ENCODE measurements at regions of chr1 and their contacts with region 1.

Region 1: DNA sequence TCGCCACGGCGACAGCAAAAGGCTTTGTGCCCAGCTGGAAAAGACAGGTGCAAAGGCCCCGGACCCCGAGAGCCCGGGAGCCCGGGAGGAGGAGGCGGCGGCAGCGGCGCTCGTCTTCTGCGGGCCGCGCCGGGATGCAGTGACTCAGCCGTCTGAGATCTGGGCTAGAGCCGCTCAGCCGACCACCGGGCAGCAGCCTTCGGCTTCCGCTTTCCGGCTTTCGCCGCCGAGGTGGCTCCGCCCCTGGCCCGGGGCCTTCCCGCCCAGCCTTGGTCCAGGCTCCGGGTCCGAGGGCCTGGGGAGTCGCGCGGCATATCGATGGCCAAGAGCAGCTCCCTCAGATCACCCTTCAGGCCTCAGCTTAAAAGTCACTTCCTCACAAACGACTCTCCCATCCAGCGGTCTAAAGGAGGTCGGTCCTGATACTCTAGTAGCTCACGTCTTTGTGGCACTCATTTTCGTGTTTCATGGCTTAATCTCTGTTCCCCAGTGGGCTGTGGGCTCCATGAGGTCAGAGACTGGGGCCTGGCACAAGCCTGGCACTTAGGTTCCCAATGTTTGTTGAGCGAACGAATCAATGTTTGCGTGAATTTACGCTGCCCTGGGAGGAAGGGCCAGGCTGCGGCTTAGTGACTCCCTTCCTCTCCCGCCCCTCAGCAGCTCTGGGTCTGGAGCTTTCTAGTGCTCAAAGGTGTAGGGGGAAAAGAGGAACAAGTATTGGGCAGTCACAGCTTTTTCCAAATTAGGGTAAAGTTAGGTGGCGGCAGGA is at the start of gene PHTF1:
- DNase-seq: peak; percentile 91 to 93 (median 92)
- ATAC-seq: peak; percentile 95
- H3K4me3 ChIP-seq: peak within 1 kb of the TSS; percentile 75
- H3K27ac ChIP-seq: peak within 1 kb of the TSS; percentile 96
- H3K4me1 ChIP-seq: peaks cover 18 to 20% of the 10 kb centered on the region in 2 experiments
- H3K27me3 ChIP-seq: no peaks in the 10 kb centered on the region
- CTCF ChIP-seq: no peak
- EP300 ChIP-seq: peak; percentile 4; the same call in 1 of the 2 replicates
- POLR2A ChIP-seq: peak; percentile 97
- RAD21 ChIP-seq: peak in 1 of 2 experiments; percentile 11; a peak in 1 of 4 replicates
- polyA plus RNA-seq, gene PHTF1: 8.4 to 10.8 TPM

Region 2: GRCh38 chr1:113534130-113534817 is 225.2 kb before region 1 on chr1:
- CTCF ChIA-PET with region 1: no interaction called
- POLR2A ChIA-PET with region 1: no interaction called
- in situ Hi-C with region 1: no loop called
- intact Hi-C with region 1: no loop called
- DNase-seq: no peak
- ATAC-seq: no peak
- H3K4me3 ChIP-seq: no peak overlapping the region
- H3K27ac ChIP-seq: no peak overlapping the region
- H3K4me1 ChIP-seq: no peaks in the 10 kb centered on the region
- H3K27me3 ChIP-seq: no peaks in the 10 kb centered on the region
- CTCF ChIP-seq: no peak
- EP300 ChIP-seq: no peak
- POLR2A ChIP-seq: no peak
- RAD21 ChIP-seq: no peak

Region 3: GRCh38 chr1:113692342-113692741 is 67.2 kb before region 1 on chr1:
- CTCF ChIA-PET with region 1: no interaction called
- POLR2A ChIA-PET with region 1: interaction called, 3 read pairs
- in situ Hi-C with region 1: no loop called
- intact Hi-C with region 1: loop called (anchors 5 kb)
- DNase-seq: no peak
- ATAC-seq: no peak
- H3K4me3 ChIP-seq: no peak overlapping the region
- H3K27ac ChIP-seq: no peak overlapping the region
- H3K4me1 ChIP-seq: peaks cover 0 to 11% of the 10 kb centered on the region in 2 experiments; a peak in 2 of 5 replicates
- H3K27me3 ChIP-seq: no peaks in the 10 kb centered on the region
- CTCF ChIP-seq: no peak
- EP300 ChIP-seq: no peak
- POLR2A ChIP-seq: no peak
- RAD21 ChIP-seq: no peak

Region 4: DNA sequence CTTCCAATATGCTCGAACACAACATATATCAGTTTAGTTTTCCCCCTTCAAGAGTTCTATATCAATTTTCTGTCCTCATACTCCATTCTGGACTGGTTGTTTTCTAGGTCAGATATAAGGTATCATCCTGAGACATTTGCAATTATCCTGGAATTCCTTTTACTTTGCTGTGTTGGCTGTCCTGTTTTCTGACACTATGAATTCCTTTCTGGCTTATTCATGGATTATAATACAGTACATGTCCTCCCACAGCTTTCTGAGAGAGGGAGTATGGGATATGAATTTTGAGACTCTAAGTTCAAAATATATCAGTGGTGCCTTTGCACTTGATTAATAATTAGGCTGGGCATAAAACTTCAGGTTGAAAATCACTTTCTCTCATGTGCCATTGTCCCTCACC is 12.1 kb before region 1 on chr1:
- CTCF ChIA-PET with region 1: no interaction called
- POLR2A ChIA-PET with region 1: interaction called, 27 read pairs
- in situ Hi-C with region 1: no loop called
- intact Hi-C with region 1: no loop called
- DNase-seq: no peak
- ATAC-seq: no peak
- H3K4me3 ChIP-seq: no peak overlapping the region
- H3K27ac ChIP-seq: no peak overlapping the region
- H3K4me1 ChIP-seq: peaks cover 0 to 3% of the 10 kb centered on the region in 2 experiments; a peak in 1 of 5 replicates
- H3K27me3 ChIP-seq: no peaks in the 10 kb centered on the region
- CTCF ChIP-seq: no peak
- EP300 ChIP-seq: no peak
- POLR2A ChIP-seq: no peak
- RAD21 ChIP-seq: no peak

Region 5: DNA sequence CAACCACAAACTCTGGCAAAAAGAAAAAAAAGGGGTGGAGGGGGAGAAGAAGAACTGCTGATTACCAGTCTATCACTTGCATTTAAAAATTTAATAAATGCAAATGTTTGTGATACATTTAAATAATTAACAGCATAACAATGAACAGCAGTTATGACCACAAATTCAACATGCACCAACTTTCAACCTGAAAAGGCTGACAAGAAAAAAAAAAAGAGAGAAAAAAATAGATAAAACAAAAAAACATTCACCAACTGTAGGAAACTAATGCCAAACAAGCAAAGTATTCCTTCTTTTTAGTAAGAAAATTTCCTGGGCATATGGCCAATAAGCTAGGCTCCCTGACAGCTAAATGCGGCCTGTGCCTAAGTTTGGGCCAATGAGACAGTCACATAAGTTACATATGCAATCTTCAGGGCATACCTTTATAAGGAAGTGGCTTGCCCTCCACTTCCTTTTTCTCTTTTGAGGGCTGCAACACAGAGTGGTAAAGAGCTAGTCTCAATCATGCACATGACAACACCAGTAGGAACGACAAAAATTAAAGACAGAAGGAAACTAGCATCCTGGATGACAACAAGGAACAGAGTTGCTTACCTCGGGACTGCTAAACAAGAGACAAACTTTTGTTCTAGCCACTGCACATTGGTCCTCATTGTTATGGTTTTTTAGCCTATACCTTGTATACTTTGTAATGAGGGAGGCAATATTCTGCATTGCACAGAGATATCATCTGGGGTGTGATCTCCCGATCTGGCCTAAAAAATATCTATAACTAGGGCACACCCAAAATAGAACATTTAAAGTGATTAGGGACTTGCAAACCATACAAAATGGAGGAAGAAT is 24.0 kb after region 1 on chr1:
- CTCF ChIA-PET with region 1: no interaction called
- POLR2A ChIA-PET with region 1: interaction called, 20 read pairs
- in situ Hi-C with region 1: no loop called
- intact Hi-C with region 1: no loop called
- DNase-seq: peak in 2 of 4 experiments; percentile 49 to 62
- ATAC-seq: peak; percentile 79
- H3K4me3 ChIP-seq: no peak overlapping the region
- H3K27ac ChIP-seq: peak overlapping the region; percentile 23; the same call in 1 of the 3 replicates
- H3K4me1 ChIP-seq: peaks cover 15 to 60% of the 10 kb centered on the region in 2 experiments
- H3K27me3 ChIP-seq: no peaks in the 10 kb centered on the region
- CTCF ChIP-seq: no peak
- EP300 ChIP-seq: no peak
- POLR2A ChIP-seq: no peak
- RAD21 ChIP-seq: no peak

Region 6: GRCh38 chr1:113811888-113812660 is 52.6 kb after region 1 on chr1 and contains the start of gene RSBN1:
- CTCF ChIA-PET with region 1: no interaction called
- POLR2A ChIA-PET with region 1: interaction called, 6 read pairs
- in situ Hi-C with region 1: no loop called
- intact Hi-C with region 1: loop called (anchors 2 kb)
- DNase-seq: peak; percentile 90 to 100 (median 92)
- ATAC-seq: peak; percentile 94
- H3K4me3 ChIP-seq: peak within 1 kb of the TSS; percentile 92
- H3K27ac ChIP-seq: peak within 1 kb of the TSS; percentile 93
- H3K4me1 ChIP-seq: peaks cover 10% of the 10 kb centered on the region in 2 experiments; a peak in 4 of 5 replicates
- H3K27me3 ChIP-seq: no peaks in the 10 kb centered on the region
- CTCF ChIP-seq: peak in 2 of 3 experiments; percentile 7 to 29; a peak in 2 of 6 replicates
- EP300 ChIP-seq: peak; percentile 95
- POLR2A ChIP-seq: peak; percentile 94
- RAD21 ChIP-seq: no peak
- polyA plus RNA-seq, gene RSBN1: 4.5 to 13.0 TPM

Region 7: DNA sequence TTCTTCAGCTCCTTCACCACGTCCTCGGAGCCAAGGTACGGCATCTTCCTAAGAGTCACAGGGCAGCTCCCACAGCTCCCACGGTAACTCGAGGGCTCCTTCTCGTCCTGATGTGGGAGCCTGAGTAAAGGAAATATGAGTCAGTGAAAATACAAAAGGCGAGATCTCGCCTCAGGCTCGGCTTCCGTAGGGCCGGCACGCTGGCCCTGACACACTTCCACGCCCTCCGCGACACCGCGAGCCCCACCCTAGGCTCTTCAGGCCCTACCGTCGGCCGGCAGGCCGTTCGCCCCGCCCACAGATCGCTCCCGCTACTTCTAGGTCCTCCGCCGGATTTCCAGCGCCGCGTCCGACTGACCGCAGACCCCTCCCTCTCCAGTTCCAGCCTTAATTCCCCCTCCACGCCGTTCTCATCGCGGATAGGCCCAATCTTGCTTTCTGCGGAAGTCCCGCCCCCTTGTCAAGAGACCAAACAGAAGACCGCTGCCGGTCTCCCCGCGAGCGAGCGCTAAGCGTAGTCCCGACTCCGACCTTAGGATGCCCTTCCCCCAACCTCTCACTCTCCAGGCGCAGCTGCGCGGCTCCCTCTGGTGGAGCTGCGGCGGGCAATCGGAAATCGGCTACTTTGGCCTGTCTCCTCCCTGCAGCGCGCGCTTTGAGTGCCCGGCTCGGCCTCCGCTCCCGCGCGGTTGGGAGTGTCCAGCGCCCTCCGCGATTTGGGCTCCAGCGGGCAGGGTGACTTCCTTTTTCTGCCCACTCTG is 145.3 kb after region 1 on chr1 and contains the starts of genes AP4B1 and DCLRE1B:
- CTCF ChIA-PET with region 1: interaction called, 4 read pairs
- POLR2A ChIA-PET with region 1: interaction called, 4 read pairs
- in situ Hi-C with region 1: no loop called
- intact Hi-C with region 1: loop called (anchors 1 kb)
- DNase-seq: peak; percentile 96 to 100 (median 97)
- ATAC-seq: peak; percentile 95
- H3K4me3 ChIP-seq: peak within 1 kb of the TSS; percentile 65
- H3K27ac ChIP-seq: peak within 1 kb of the TSS; percentile 93
- H3K4me1 ChIP-seq: peaks cover 10 to 19% of the 10 kb centered on the region in 2 experiments; a peak in 4 of 5 replicates
- H3K27me3 ChIP-seq: no peaks in the 10 kb centered on the region
- CTCF ChIP-seq: peak; percentile 89 to 96 (median 93)
- EP300 ChIP-seq: peak; percentile 80
- POLR2A ChIP-seq: peak; percentile 85
- RAD21 ChIP-seq: peak; percentile 95 to 98
- polyA plus RNA-seq, gene AP4B1: 21.9 to 28.2 TPM
- polyA plus RNA-seq, gene DCLRE1B: 12.4 to 22.2 TPM

Region 8: DNA sequence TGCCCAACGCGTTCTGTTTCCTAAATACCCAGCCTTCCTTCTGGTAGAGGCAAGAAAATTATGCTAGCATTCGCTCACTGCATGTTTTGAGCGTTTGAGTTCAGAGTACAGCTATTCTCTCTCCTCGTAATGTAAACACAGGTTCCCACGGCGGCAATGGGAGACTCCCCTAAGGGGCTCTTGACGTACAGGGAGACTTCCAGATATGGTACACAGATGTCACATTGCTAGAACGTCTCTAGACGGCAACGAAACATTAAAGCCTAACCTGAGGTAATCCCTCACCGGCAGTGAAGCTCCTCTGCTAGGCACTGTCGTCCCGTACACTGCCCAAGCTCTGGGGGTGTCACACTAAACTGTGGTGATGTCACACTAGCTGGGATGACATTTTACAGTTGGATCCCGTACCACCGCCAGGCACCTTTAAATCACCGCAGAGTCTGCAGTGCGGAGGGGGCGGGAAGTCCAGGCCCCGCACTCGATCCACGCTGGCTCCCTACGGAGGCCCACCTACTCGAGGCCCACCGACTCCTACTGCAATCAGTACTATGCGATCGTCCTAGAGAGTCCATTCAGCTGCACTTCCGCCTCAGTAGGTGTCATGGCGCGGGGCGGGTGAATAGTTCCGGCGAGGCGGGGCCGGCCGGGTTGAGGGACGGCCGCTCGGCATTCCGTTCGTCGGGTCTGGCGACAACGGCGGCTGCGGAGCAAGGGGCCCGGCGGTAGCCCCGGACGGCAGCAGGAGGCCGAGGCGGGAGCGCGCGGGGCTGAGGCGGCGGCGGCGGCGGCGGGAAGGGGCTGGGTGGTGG is 169.6 kb after region 1 on chr1 and contains the start of gene HIPK1:
- CTCF ChIA-PET with region 1: no interaction called
- POLR2A ChIA-PET with region 1: interaction called, 17 read pairs
- in situ Hi-C with region 1: no loop called
- intact Hi-C with region 1: loop called (anchors 10 kb)
- DNase-seq: peak; percentile 92 to 97 (median 93)
- ATAC-seq: peak; percentile 76
- H3K4me3 ChIP-seq: peak within 1 kb of the TSS; percentile 70
- H3K27ac ChIP-seq: peak within 1 kb of the TSS; percentile 96
- H3K4me1 ChIP-seq: peaks cover 15 to 34% of the 10 kb centered on the region in 2 experiments
- H3K27me3 ChIP-seq: no peaks in the 10 kb centered on the region
- CTCF ChIP-seq: no peak
- EP300 ChIP-seq: no peak; the same call in 1 of the 2 replicates
- POLR2A ChIP-seq: peak; percentile 85
- RAD21 ChIP-seq: peak; percentile 3 to 10; a peak in 1 of 4 replicates
- polyA plus RNA-seq, gene HIPK1: 10.0 to 10.9 TPM

Region 9: DNA sequence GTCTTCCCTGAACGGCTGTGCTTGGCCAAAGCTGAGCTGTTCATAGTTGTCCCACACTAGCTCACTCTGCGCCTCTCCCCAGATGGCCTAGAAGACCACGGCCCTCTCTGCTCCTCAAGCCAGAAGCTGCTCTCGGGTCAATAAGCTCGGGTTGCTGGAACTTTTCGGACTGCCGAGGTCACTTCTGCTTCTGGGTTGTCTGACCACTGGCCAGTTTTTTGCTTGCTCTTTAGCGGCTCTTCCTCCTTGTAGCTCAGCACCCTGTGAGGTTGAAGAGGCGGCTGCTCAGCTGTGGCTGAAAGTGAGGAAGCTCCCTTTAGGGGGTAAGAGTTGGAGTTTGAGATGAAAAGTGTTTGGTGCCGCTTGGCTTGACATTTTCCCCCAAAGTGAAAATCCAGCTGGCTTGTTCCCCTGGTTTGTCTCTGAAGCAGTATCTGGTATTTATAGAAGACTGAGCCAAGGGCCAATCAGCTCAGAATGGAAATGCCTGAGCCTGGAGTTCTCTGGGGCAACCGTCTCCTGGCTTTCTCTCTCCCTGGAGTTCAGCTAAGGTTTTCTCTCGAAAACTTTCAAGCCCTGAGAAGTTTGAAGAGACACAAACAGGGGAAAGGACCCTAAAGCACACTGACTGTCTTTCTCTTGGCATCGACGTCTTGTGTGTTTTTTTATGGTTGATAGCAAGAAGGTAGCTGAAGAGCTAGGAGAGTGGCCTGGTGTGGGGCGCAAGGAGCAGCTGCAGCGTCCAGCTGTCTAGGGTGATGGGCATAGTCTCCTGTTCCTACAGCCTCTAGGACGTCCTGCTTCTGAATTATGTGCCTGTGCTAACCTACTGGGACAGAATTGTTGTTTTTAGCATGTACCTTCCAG is 322.2 kb after region 1 on chr1:
- CTCF ChIA-PET with region 1: no interaction called
- POLR2A ChIA-PET with region 1: no interaction called
- in situ Hi-C with region 1: no loop called
- intact Hi-C with region 1: no loop called
- DNase-seq: no peak
- ATAC-seq: peak; percentile 40
- H3K4me3 ChIP-seq: no peak overlapping the region
- H3K27ac ChIP-seq: no peak overlapping the region
- H3K4me1 ChIP-seq: peaks cover 14 to 32% of the 10 kb centered on the region in 2 experiments; a peak in 4 of 5 replicates
- H3K27me3 ChIP-seq: peaks cover 2 to 18% of the 10 kb centered on the region in 2 experiments; a peak in 4 of 5 replicates
- CTCF ChIP-seq: no peak
- EP300 ChIP-seq: no peak
- POLR2A ChIP-seq: no peak
- RAD21 ChIP-seq: no peak

Measured in K562 (cell line).